H1 (cell line): ENCODE measurements at regions of chr2 and their contacts with region 1.

Region 1: GRCh38 chr2:15546297-15547098 is 14.6 kb downstream of the NBAS start:
- DNase-seq: peak in 1 of 2 experiments; percentile 48
- H3K4me3 ChIP-seq: no peak overlapping the region
- H3K27ac ChIP-seq: no peak overlapping the region
- H3K4me1 ChIP-seq: no peaks in the 10 kb centered on the region
- H3K27me3 ChIP-seq: no peaks in the 10 kb centered on the region
- CTCF ChIP-seq: peak; percentile 8 to 56 (median 42); a peak in 3 of 4 replicates
- EP300 ChIP-seq: no peak
- POLR2A ChIP-seq: no peak
- RAD21 ChIP-seq: no peak; a peak in 1 of 4 replicates

Region 2: GRCh38 chr2:15507061-15507460 is 39.4 kb before region 1 on chr2:
- CTCF ChIA-PET with region 1: interaction called, 18 read pairs
- POLR2A ChIA-PET with region 1: no interaction called
- DNase-seq: no peak
- H3K4me3 ChIP-seq: no peak overlapping the region
- H3K27ac ChIP-seq: no peak overlapping the region
- H3K4me1 ChIP-seq: no peaks in the 10 kb centered on the region
- H3K27me3 ChIP-seq: no peaks in the 10 kb centered on the region
- CTCF ChIP-seq: no peak
- EP300 ChIP-seq: no peak
- POLR2A ChIP-seq: no peak
- RAD21 ChIP-seq: no peak

Region 3: GRCh38 chr2:15560988-15561573 is 14.6 kb after region 1 on chr2 and contains the start of gene NBAS:
- CTCF ChIA-PET with region 1: interaction called, 18 read pairs
- POLR2A ChIA-PET with region 1: no interaction called
- DNase-seq: peak; percentile 38 to 86
- H3K4me3 ChIP-seq: peak within 1 kb of the TSS; percentile 88 to 98 (median 96)
- H3K27ac ChIP-seq: no peak within 1 kb of the TSS
- H3K4me1 ChIP-seq: peaks cover 0 to 4% (median 0%) of the 10 kb centered on the region in 4 experiments; a peak in 1 of 7 replicates
- H3K27me3 ChIP-seq: no peaks in the 10 kb centered on the region
- CTCF ChIP-seq: no peak
- EP300 ChIP-seq: 0 out of 3 replicates have a peak, but pooled peaks of 1 of the 2 experiments have one; percentile 33
- POLR2A ChIP-seq: peak; percentile 29 to 71
- RAD21 ChIP-seq: no peak
- total RNA-seq, gene NBAS: 34.1 and 34.8 TPM in 2 replicates

Region 4: GRCh38 chr2:15570104-15570503 is 23.6 kb after region 1 on chr2:
- CTCF ChIA-PET with region 1: interaction called, 18 read pairs
- POLR2A ChIA-PET with region 1: no interaction called
- DNase-seq: no peak
- H3K4me3 ChIP-seq: no peak overlapping the region
- H3K27ac ChIP-seq: no peak overlapping the region
- H3K4me1 ChIP-seq: no peaks in the 10 kb centered on the region
- H3K27me3 ChIP-seq: no peaks in the 10 kb centered on the region
- CTCF ChIP-seq: no peak
- EP300 ChIP-seq: no peak
- POLR2A ChIP-seq: no peak
- RAD21 ChIP-seq: no peak

Region 5: GRCh38 chr2:15577071-15577735 is 30.7 kb after region 1 on chr2:
- CTCF ChIA-PET with region 1: interaction called, 18 read pairs
- POLR2A ChIA-PET with region 1: no interaction called
- DNase-seq: peak; percentile 74 to 95
- H3K4me3 ChIP-seq: no peak overlapping the region
- H3K27ac ChIP-seq: no peak overlapping the region
- H3K4me1 ChIP-seq: no peaks in the 10 kb centered on the region
- H3K27me3 ChIP-seq: no peaks in the 10 kb centered on the region
- CTCF ChIP-seq: peak; percentile 66 to 90 (median 85)
- EP300 ChIP-seq: no peak
- POLR2A ChIP-seq: no peak
- RAD21 ChIP-seq: peak; percentile 89 to 90